ENCODE measurements at regions of chr19 and their contacts with region 1.

Region 1: GRCh38 chr19:7699417-7700401 is 2.2 kb downstream of the FCER2 start:
- H3K4me3 Mint-ChIP-seq: peak overlapping the region; percentile 85
- H3K27ac Mint-ChIP-seq: peak overlapping the region; percentile 96
- H3K4me1 Mint-ChIP-seq: peaks cover 77% of the 10 kb centered on the region
- H3K27me3 Mint-ChIP-seq: no peaks in the 10 kb centered on the region

Region 2: DNA sequence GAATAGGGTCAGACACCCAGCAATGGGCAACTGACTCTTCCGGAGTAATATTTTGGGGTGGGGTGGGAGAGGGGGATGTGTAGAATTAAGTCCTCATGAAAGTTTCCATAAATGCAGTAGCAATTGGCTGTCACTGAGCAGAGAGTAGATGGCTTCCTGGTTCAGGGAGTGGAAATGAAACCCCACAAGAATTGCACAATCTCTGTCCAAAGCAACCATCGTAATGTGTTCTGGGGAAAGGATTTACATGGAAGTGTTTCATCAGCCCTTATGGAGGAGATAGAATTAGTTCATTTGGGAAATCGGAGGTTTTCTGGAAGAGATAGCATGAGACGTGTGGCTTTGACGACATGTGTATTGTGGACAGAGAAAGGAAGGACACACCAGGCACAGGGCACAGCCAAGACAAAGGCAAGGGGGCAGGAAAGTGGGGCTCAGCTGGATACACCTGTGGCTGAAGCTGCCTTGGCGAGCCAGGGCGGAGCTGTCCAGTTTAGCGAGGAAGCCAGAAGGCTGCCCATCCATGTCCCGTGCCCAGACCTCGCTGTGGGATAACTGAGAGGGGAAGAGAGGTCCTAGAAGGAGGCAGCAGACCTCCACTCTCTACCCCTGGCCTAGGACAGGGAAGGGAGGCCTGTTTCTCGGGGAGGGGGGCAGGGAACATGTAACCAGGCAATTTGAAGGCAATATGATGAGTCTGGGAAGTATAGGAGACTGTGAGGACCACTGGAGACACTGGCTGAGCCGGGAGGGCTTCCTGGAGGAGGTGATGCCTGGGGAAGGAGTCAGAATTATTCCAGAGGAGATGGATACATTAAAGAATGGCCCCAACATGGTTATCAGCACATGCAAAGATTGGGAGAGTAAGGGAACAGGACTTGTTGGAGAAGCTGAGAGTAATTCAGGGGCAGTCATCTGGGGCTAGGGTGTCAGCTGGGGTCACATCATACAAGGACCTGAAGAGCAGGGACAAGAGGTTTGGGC is 34.8 kb after region 1 on chr19:
- intact Hi-C with region 1: loop called (anchors 5 kb)
- H3K4me3 Mint-ChIP-seq: peak overlapping the region; percentile 52
- H3K27ac Mint-ChIP-seq: peak overlapping the region; percentile 87
- H3K4me1 Mint-ChIP-seq: peaks cover 91% of the 10 kb centered on the region
- H3K27me3 Mint-ChIP-seq: no peaks in the 10 kb centered on the region

Region 3: DNA sequence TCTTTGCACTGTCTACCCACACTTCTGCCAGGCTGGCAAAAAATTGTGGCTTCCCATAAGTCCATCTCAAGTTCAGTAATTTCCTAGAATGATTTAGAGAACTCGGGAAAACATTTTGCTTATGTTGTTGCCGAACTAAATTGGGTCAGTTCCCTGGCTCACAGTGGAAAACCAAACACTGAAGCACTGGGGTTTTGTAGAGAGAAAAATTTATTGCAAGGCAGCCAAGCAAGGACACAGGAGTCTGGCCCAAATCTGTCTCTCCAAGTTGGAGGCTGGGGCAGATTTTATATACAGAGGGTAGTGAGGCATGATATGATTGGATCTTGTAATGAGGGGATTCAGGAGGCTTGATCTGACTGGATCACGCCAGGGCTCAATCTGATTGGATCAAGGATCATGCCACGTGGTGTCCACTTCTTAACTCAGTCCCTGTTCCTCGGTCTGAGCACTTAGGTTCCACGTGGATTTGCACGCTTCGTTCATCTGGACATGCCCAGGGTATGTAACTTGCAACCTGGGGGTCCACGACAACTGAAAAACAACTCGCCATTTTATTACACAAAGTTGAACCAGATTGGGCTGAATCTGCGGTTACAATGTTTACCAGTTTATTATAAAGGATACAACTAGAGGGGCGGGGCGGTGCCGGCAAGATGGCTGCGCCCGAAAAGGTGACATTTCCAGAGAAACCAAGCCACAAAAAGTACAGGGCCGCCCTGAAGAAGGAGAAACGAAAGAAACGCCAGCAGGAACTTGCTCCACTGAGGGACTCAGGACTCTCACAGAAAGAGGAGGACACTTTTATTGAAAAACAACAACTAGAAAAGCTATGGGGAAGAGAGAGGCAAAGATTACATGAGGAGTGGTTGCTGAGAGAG is 40.3 kb after region 1 on chr19:
- intact Hi-C with region 1: loop called (anchors 2 kb)
- H3K4me3 Mint-ChIP-seq: peak overlapping the region; percentile 61
- H3K27ac Mint-ChIP-seq: peak overlapping the region; percentile 87
- H3K4me1 Mint-ChIP-seq: peaks cover 97% of the 10 kb centered on the region
- H3K27me3 Mint-ChIP-seq: no peaks in the 10 kb centered on the region

Region 4: DNA sequence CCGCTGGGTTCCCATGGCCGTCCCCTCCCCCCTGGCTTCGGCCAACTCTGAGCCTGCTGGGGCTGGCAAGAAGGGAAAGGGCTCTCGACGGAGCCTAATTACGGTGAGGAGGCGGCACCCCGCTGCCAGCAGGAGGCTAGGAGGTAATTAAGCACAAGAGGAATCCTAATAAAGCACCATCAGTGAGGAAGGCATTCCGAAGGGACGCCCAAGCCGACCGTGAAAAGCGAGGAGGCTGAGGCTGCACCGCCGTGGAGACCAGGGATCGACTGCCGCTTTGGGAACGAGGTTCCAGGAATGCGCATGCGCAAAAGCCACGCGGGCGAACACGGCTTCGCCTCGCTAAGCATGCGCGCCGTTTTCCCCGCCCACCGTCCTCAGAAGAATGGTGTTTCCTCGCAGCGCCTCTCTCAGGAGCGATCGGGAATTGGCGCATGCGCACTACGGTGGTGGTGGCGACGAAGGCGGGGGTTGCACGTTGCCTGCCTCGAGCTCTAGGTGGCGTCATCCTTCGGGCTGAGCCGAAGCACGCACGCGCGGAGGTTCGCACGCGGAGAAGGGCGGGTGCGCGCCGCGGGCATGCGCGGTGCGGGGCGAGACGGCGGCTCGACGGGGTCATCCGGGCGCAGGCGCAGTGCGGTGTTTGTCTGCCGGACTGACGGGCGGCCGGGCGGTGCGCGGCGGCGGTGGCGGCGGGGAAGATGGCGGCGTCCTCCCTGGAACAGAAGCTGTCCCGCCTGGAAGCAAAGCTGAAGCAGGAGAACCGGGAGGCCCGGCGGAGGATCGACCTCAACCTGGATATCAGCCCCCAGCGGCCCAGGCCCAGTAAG is 203.8 kb after region 1 on chr19 and contains the start of gene MAP2K7:
- intact Hi-C with region 1: no loop called
- H3K4me3 Mint-ChIP-seq: peak within 1 kb of the TSS; percentile 90
- H3K27ac Mint-ChIP-seq: peak within 1 kb of the TSS; percentile 86
- H3K4me1 Mint-ChIP-seq: peaks cover 45% of the 10 kb centered on the region
- H3K27me3 Mint-ChIP-seq: peaks cover 15% of the 10 kb centered on the region